Activated CD8-positive, alpha-beta memory T cell treated with anti-CD3 and anti-CD28 coated beads, Interleukin-2, amount 10 ng/mL, durations not matched to agents 7 days and 5 days (primary cell): ENCODE measurements at regions of chrX and their contacts with region 1.

Region 1: GRCh38 chrX:119729408-119730201 is 28.8 kb upstream of the SOWAHD start:
- DNase-seq: peak; percentile 78
- ATAC-seq: peak; percentile 60
- H3K4me3 Mint-ChIP-seq: no peak overlapping the region
- H3K27ac Mint-ChIP-seq: peak overlapping the region; percentile 49
- H3K4me1 Mint-ChIP-seq: peaks cover 20% of the 10 kb centered on the region
- H3K27me3 Mint-ChIP-seq: no peaks in the 10 kb centered on the region

Region 2: GRCh38 chrX:119516157-119516702 is 213.4 kb before region 1 on chrX:
- CTCF ChIA-PET with region 1: interaction called, 14 read pairs
- DNase-seq: peak; percentile 54
- ATAC-seq: peak; percentile 98
- H3K4me3 Mint-ChIP-seq: no peak overlapping the region
- H3K27ac Mint-ChIP-seq: peak overlapping the region; percentile 47
- H3K4me1 Mint-ChIP-seq: peaks cover 6% of the 10 kb centered on the region
- H3K27me3 Mint-ChIP-seq: no peaks in the 10 kb centered on the region

Region 3: GRCh38 chrX:119676949-119677653 is 52.5 kb before region 1 on chrX:
- CTCF ChIA-PET with region 1: interaction called, 11 read pairs
- DNase-seq: no peak
- ATAC-seq: no peak
- H3K4me3 Mint-ChIP-seq: peak overlapping the region; percentile 75
- H3K27ac Mint-ChIP-seq: peak overlapping the region; percentile 98
- H3K4me1 Mint-ChIP-seq: peaks cover 55% of the 10 kb centered on the region
- H3K27me3 Mint-ChIP-seq: no peaks in the 10 kb centered on the region

Region 4: DNA sequence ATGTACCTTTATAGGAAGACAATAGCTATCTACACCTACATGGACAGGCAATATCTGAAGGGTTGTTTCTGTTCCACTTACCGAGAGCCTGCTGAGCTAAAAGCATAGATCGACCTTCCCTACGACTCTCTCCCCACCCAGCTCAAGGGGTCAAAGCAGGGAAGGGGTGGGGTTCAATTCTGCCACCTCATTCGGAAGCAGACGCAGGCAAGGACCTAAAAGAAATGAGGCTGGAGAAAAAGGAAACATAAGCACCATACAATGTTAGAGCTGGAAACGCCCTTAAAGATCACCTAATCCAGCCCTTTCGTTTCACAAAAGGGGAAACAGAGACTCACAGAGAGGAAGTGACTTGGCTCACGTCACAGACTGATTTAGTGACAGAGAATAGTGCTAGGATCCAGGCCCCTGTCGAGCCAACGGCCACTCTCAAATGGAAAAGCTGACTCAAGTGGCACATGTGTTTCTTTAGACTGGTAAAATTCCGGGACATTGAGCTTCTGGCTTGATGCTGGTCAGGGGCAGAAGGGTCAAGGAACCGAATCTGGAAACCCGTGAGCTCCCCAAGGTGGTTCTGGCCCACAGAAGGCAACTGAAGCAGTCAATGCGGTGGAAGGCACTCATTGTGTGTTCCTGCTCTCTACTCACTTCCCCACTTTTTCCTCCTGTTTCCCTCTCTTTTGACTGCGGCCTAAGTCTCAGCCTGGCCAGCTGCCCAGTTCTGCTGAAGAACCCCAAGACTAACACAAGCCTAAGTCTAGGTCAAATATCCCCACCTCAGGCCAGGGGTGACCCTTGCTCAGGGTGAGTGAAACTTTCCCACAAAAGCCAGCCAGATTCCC is 44.2 kb before region 1 on chrX:
- CTCF ChIA-PET with region 1: interaction called, 47 read pairs
- DNase-seq: peak; percentile 77
- ATAC-seq: peak; percentile 55
- H3K4me3 Mint-ChIP-seq: peak overlapping the region; percentile 81
- H3K27ac Mint-ChIP-seq: peak overlapping the region; percentile 99
- H3K4me1 Mint-ChIP-seq: peaks cover 62% of the 10 kb centered on the region
- H3K27me3 Mint-ChIP-seq: no peaks in the 10 kb centered on the region

Region 5: DNA sequence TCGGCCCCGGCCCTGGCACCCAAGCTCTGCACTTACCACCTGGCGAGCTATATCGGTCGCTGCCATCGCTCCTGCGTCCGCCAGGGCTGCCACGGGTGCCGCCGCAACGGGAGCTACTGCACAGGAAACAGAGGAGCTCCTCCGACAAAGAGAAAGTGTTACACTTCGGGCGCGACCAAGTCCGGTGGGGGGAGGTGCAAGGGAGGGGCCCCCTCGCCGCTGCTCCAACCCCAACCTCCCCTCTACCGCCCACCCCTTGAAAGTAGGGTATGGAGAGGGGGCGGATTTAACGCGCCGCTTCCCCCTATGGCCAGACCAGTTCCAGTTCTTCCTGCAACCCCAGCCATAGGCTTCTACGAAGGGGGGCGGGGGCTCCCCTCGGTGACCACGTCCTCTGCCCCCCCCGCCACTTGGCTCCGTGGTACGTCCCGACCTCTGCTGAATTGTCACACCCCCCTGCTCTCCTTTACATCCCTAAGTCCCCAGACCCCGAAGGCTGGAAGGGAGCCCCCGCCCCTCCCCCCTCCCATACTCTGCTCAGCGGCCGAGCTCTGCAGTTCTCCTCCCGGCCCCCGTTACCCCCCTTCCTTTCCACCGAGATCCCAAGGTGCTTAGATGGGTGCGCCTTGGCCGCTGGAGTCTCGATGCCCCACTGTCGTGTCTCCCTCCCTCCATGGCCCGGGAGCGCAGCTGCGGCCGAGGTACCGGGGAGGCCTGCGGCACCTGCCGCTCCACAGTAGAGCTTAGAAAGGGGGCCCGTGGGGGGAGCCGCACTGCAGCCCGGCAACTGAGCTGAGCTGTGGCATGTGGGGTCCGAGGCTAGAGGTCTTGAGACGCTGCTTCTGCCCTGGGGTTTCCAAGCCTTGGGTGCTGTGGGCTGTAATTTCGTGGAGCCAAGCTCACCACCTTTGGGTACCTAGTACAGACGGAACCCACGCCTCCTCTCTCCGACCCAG is 36.3 kb before region 1 on chrX and contains the start of gene SEPTIN6:
- CTCF ChIA-PET with region 1: interaction called, 47 read pairs
- DNase-seq: peak; percentile 90
- ATAC-seq: peak; percentile 66
- H3K4me3 Mint-ChIP-seq: peak within 1 kb of the TSS; percentile 97
- H3K27ac Mint-ChIP-seq: peak within 1 kb of the TSS; percentile 99
- H3K4me1 Mint-ChIP-seq: peaks cover 19% of the 10 kb centered on the region
- H3K27me3 Mint-ChIP-seq: no peaks in the 10 kb centered on the region
- total RNA-seq, gene SEPTIN6: 236 to 263 TPM

Region 6: GRCh38 chrX:119698845-119699244 is 30.8 kb before region 1 on chrX:
- CTCF ChIA-PET with region 1: interaction called, 47 read pairs
- DNase-seq: no peak
- ATAC-seq: peak; percentile 66
- H3K4me3 Mint-ChIP-seq: no peak overlapping the region
- H3K27ac Mint-ChIP-seq: no peak overlapping the region
- H3K4me1 Mint-ChIP-seq: peaks cover 6% of the 10 kb centered on the region
- H3K27me3 Mint-ChIP-seq: no peaks in the 10 kb centered on the region

Region 7: GRCh38 chrX:119753571-119754257 is 24.1 kb after region 1 on chrX:
- CTCF ChIA-PET with region 1: interaction called, 30 read pairs
- DNase-seq: peak; percentile 67
- ATAC-seq: peak; percentile 28
- H3K4me3 Mint-ChIP-seq: no peak overlapping the region
- H3K27ac Mint-ChIP-seq: peak overlapping the region; percentile 98
- H3K4me1 Mint-ChIP-seq: peaks cover 46% of the 10 kb centered on the region
- H3K27me3 Mint-ChIP-seq: no peaks in the 10 kb centered on the region